Ascending aorta (tissue), 2 donors: ENCODE measurements at regions of chr2 and their contacts with region 1.

Region 1: DNA sequence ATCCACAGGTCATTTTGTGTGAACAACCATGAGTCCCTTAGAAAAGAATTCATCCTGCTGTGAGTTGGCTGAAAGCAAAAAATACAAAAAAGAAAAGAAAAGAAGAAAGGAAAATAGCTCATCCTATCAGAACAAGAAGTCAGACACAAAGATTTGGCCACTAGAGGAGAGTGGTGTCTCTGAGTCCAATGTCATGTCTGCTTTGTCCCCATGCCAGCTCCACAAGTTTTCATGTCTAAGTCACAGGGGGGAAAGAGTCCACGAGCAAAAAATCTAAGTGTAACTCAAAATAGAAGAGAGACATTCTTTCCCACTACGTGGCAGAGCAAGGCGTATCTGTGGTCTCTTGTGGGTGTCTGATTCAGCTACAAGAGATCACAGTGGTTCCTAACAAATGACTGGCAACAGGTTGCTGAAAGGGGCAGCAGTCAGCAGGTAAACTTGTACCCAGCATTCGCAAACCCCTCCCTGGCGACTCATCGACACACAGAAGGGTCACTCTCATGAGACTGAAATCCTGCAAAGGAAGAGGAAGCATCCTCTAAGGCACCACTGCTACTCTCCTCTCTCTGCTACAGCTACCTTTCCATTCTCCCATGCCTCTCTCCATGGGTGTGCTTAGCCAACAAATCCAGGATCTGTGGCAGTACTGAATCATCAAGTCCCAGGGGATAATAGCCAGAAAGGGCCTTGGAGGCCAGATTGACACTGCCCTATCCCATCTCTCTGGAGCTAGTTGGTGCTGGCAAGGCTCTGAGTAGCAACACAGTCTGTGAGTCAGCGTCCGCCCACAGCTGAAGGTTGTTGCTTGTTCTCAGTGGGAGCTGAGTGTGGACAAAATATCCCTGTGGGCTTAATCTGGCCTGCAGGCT is 123.0 kb upstream of the SLC39A10 start:
- DNase-seq: peak; percentile 59 to 92
- H3K4me3 ChIP-seq: peak overlapping the region in 1 of 2 donors; percentile 17
- H3K27ac ChIP-seq: peak overlapping the region; percentile 79 to 82
- H3K4me1 ChIP-seq: peaks cover 7 to 21% of the 10 kb centered on the region in 2 donors
- H3K27me3 ChIP-seq: no peaks in the 10 kb centered on the region
- CTCF ChIP-seq: no peak

Region 2: DNA sequence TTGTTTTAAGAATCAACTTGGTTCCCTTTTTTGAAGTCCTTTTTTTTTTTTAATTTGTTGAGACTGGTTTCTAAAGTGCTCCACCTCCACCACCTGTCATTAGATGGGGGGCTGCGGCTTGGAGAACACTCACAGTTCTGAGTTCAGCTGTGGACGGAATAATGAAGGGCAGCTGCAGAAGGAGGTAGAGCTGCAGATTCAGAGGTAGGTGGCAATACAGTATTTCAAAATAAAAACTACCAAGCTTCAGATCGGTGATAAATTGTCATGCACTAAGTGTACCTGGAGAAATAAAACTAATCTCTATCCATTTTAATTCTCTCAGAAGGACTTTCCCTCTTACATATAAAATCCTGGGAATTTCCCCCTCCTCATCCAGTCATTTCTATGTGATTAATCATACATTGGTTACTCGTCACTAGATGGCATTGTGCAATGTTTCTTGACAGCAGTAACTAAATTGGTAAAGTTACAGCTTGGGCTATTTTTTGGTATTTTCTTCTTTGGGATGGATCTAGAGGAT is 41.9 kb after region 1 on chr2:
- intact Hi-C with region 1: loop called (anchors 5 kb)
- DNase-seq: no peak
- H3K4me3 ChIP-seq: no peak overlapping the region
- H3K27ac ChIP-seq: no peak overlapping the region
- H3K4me1 ChIP-seq: peaks cover 0 to 15% of the 10 kb centered on the region in 2 donors
- H3K27me3 ChIP-seq: no peaks in the 10 kb centered on the region
- CTCF ChIP-seq: no peak